Heart left ventricle (tissue), 16 donors: ENCODE measurements at regions of chr14 and their contacts with region 1.

Region 1: GRCh38 chr14:71320107-71320733 is 413.0 kb downstream of the PCNX1 start:
- DNase-seq: peak; percentile 98 to 100 (median 99)
- ATAC-seq: peak; percentile 98 to 99 (median 98)
- H3K4me3 ChIP-seq: peak within 1 kb of the TSS; percentile 68 to 96 (median 90)
- H3K27ac ChIP-seq: peak within 1 kb of the TSS; percentile 82 to 99 (median 92)
- H3K4me1 ChIP-seq: peaks cover 0 to 34% (median 12%) of the 10 kb centered on the region in 12 donors
- H3K27me3 ChIP-seq: no peaks in the 10 kb centered on the region
- CTCF ChIP-seq: peak in 2 of 12 donors; percentile 7 to 10
- POLR2A ChIP-seq: peak in 1 of 2 donors; percentile 85

Region 2: GRCh38 chr14:71155743-71156142 is 164.5 kb before region 1 on chr14:
- intact Hi-C with region 1: loop called in 2 of 10 experiments (anchors 10 kb)
- DNase-seq: no peak
- ATAC-seq: no peak
- H3K4me3 ChIP-seq: no peak overlapping the region
- H3K27ac ChIP-seq: no peak overlapping the region
- H3K4me1 ChIP-seq: no peaks in the 10 kb centered on the region
- H3K27me3 ChIP-seq: no peaks in the 10 kb centered on the region
- CTCF ChIP-seq: no peak
- POLR2A ChIP-seq: no peak

Region 3: DNA sequence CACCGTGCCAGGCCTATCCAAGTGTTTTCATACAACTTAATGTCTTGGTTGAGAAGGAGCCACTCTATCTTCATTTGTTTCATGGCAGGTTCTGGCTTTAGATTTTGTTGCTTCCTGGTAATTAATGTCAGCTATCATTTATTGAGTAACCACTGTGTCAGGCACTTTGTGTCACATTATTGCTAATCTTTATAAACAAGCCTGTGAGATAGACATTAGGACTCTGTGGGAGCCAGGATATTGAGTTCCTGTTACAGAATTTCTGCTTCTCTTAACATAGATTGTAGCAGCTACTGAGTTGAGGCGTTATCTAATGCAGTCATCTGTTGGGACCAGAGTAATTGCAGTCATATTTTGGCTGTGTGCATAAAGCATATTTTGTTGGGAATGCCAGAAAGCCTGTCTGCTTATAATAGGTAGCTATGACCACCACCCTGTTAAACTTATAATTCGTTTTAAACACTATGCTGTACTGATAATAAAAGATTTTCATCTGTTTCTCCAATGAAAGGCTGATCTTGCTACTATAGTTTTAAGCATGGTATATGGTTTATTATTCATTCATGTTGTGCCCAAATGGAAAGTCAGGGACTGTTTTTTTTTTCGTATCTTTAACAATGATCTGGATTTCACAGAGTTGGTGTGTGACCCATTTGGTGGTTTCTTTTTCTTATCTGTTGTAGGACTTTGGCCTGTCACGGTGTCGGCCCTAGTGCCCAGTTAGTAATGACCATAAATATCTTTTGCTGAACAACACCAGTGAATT is 19.6 kb after region 1 on chr14:
- intact Hi-C with region 1: no loop called
- DNase-seq: no peak
- ATAC-seq: no peak
- H3K4me3 ChIP-seq: no peak overlapping the region
- H3K27ac ChIP-seq: peak overlapping the region in 1 of 12 donors; percentile 74
- H3K4me1 ChIP-seq: peaks cover 0 to 29% (median 0%) of the 10 kb centered on the region in 12 donors
- H3K27me3 ChIP-seq: no peaks in the 10 kb centered on the region
- CTCF ChIP-seq: no peak
- POLR2A ChIP-seq: no peak

Region 4: DNA sequence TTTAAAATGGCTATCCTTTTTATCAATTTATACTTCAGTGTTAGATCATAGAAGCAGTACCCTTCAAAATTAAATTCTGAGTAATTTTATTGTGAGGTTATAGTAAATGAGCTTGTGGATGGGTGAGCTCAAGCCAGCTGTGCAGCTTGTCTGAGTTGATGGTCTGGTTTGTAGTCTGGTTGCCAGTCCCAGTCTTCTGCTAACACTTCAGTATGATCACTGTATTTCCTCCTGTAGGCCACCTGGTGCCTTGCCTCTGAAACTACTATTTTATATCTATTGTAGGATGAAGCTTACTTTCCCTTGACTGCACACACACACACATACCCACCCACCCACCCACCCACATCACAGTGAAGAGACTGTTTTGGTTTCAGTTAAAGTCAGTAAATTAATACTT is 83.4 kb after region 1 on chr14:
- intact Hi-C with region 1: loop called in 1 of 10 experiments (anchors 10 kb)
- DNase-seq: no peak
- ATAC-seq: no peak
- H3K4me3 ChIP-seq: no peak overlapping the region
- H3K27ac ChIP-seq: no peak overlapping the region
- H3K4me1 ChIP-seq: peaks cover 0 to 28% (median 0%) of the 10 kb centered on the region in 12 donors
- H3K27me3 ChIP-seq: no peaks in the 10 kb centered on the region
- CTCF ChIP-seq: no peak
- POLR2A ChIP-seq: no peak

Region 5: DNA sequence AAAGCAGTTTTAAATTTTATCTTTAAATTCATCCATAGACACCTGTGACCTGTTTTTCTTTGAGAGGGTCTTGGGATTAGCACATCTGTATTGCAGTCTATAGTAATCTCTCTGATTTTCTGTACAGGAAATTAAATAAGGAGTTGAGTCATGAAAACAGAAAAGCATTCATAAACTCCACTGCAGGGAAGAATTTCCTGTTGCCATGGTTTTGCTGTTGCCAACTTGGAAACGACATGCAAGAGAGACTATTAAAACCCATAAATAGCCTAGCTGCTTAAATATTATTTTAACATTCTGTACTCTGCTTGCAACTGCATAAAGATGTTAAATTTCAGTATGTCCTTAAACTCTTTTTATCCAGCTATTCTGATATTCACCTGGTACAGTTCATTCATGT is 331.0 kb after region 1 on chr14:
- intact Hi-C with region 1: loop called in 1 of 10 experiments (anchors 10 kb)
- DNase-seq: peak in 1 of 5 donors; percentile 42
- ATAC-seq: peak; percentile 14 to 71 (median 42)
- H3K4me3 ChIP-seq: no peak overlapping the region
- H3K27ac ChIP-seq: peak overlapping the region in 6 of 12 donors; percentile 1 to 52 (median 30)
- H3K4me1 ChIP-seq: peaks cover 0 to 13% (median 4%) of the 10 kb centered on the region in 12 donors
- H3K27me3 ChIP-seq: no peaks in the 10 kb centered on the region
- CTCF ChIP-seq: no peak
- POLR2A ChIP-seq: no peak

Region 6: GRCh38 chr14:71753126-71753830 is 433.1 kb after region 1 on chr14:
- intact Hi-C with region 1: loop called in 7 of 10 experiments (anchors 2 to 5 kb)
- DNase-seq: peak; percentile 90 to 95 (median 92)
- ATAC-seq: peak in 3 of 4 donors; percentile 85 to 90 (median 90)
- H3K4me3 ChIP-seq: peak overlapping the region in 4 of 12 donors; percentile 2 to 22 (median 12)
- H3K27ac ChIP-seq: peak overlapping the region in 2 of 12 donors; percentile 15 to 38
- H3K4me1 ChIP-seq: peaks cover 0 to 16% (median 2%) of the 10 kb centered on the region in 12 donors
- H3K27me3 ChIP-seq: no peaks in the 10 kb centered on the region
- CTCF ChIP-seq: peak; percentile 71 to 96 (median 94)
- POLR2A ChIP-seq: no peak